H1 (cell line): ENCODE measurements at regions of chr11 and their contacts with region 1.

Region 1: DNA sequence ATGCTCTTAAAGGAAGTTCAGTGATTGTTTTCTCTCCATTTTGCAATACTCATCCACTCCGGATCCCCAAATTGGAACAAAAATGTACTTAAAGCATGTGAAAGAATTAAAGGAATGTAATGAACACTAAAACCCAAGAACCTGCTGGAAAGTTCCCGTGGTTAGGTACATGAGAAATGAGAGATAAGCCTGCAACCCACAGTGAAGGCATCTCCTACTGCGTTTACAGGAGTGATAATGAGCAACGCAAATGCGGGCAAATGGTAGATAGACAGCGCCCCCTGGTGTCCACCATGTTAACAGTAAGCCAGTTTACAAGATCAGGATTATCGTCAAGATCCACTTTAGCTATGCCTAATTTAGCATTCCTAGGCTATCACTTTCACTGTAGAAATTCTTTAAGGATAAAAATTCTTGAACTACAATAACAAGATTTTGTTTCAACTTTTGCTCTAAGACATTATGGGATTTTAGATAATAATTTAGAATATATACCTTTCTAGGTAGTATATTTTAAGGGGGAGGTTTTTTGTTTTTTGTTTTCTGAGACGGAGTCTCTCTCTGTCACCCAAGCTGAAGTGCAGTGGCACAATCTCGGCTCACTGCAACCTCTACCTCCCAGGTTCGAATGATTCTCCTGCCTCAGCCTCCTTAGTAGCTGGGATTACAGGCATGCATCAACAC is 29.9 kb downstream of the ALG9 start:
- DNase-seq: peak; percentile 46 to 94
- H3K4me3 ChIP-seq: no peak overlapping the region
- H3K27ac ChIP-seq: no peak overlapping the region
- H3K4me1 ChIP-seq: peaks cover 0 to 7% (median 3%) of the 10 kb centered on the region in 4 experiments; a peak in 2 of 7 replicates
- H3K27me3 ChIP-seq: no peaks in the 10 kb centered on the region
- CTCF ChIP-seq: peak; percentile 56 to 91 (median 86)
- EP300 ChIP-seq: no peak
- POLR2A ChIP-seq: no peak
- RAD21 ChIP-seq: peak; percentile 97

Region 2: DNA sequence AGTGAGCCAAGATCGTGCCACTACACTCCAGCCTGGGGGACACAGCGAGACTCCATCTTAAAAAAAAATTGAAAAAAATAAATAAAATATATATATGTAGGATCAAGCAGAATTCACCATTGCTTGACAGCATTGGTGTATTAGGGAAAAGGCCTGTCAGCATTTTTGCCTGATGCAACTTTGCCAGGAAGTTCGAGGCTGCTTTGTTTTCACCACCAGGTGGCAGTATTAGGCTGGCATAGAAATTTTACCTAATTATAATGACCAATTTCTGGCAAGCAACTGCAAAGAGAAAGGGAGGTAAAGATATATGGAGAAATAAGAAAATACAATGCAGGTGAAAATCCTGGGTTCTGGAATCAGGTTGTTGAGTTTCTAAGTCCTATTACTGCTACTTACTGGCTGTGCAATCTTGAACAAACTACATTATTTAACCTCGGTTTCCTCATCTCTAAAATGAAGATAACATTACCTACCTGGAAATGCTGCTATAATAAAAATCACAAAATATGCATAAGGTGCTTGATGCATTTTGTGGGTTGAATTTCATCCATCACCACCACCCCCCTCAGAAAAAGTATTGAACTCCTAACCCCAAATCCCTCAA is 276.3 kb before region 1 on chr11:
- CTCF ChIA-PET with region 1: interaction called, 11 read pairs
- POLR2A ChIA-PET with region 1: no interaction called
- DNase-seq: peak in 1 of 2 experiments; percentile 72
- H3K4me3 ChIP-seq: no peak overlapping the region
- H3K27ac ChIP-seq: no peak overlapping the region
- H3K4me1 ChIP-seq: peaks cover 0 to 6% (median 4%) of the 10 kb centered on the region in 4 experiments; a peak in 4 of 7 replicates
- H3K27me3 ChIP-seq: no peaks in the 10 kb centered on the region
- CTCF ChIP-seq: peak; percentile 6 to 74 (median 72)
- EP300 ChIP-seq: no peak
- POLR2A ChIP-seq: no peak
- RAD21 ChIP-seq: peak; percentile 81 to 84

Region 3: GRCh38 chr11:111601979-111602864 is 239.3 kb before region 1 on chr11 and contains the start of gene SIK2:
- CTCF ChIA-PET with region 1: interaction called, 12 read pairs
- POLR2A ChIA-PET with region 1: no interaction called
- DNase-seq: peak; percentile 92
- H3K4me3 ChIP-seq: peak within 1 kb of the TSS; percentile 62 to 96 (median 77)
- H3K27ac ChIP-seq: peak within 1 kb of the TSS; percentile 45; the same call in 1 of the 2 replicates
- H3K4me1 ChIP-seq: peaks cover 0 to 10% (median 3%) of the 10 kb centered on the region in 4 experiments; a peak in 2 of 7 replicates
- H3K27me3 ChIP-seq: peaks cover 0 to 18% (median 12%) of the 10 kb centered on the region in 4 experiments; a peak in 5 of 7 replicates
- CTCF ChIP-seq: peak; percentile 93 to 97 (median 96)
- EP300 ChIP-seq: peak in 1 of 2 experiments; percentile 39; a peak in 1 of 3 replicates
- POLR2A ChIP-seq: 0 out of 3 replicates have a peak, but pooled peaks of 1 of the 2 experiments have one; percentile 53
- RAD21 ChIP-seq: peak; percentile 99
- total RNA-seq, gene SIK2: 8.8 and 12.7 TPM in 2 replicates

Region 4: GRCh38 chr11:111823131-111823530 is 18.4 kb before region 1 on chr11:
- CTCF ChIA-PET with region 1: interaction called, 12 read pairs
- POLR2A ChIA-PET with region 1: interaction called, 3 read pairs
- DNase-seq: no peak
- H3K4me3 ChIP-seq: peak overlapping the region in 1 of 4 experiments; percentile 9; a peak in 1 of 8 replicates
- H3K27ac ChIP-seq: no peak overlapping the region
- H3K4me1 ChIP-seq: peaks cover 0 to 5% (median 3%) of the 10 kb centered on the region in 4 experiments; a peak in 3 of 7 replicates
- H3K27me3 ChIP-seq: no peaks in the 10 kb centered on the region
- CTCF ChIP-seq: no peak
- EP300 ChIP-seq: no peak
- POLR2A ChIP-seq: no peak
- RAD21 ChIP-seq: no peak

Region 5: DNA sequence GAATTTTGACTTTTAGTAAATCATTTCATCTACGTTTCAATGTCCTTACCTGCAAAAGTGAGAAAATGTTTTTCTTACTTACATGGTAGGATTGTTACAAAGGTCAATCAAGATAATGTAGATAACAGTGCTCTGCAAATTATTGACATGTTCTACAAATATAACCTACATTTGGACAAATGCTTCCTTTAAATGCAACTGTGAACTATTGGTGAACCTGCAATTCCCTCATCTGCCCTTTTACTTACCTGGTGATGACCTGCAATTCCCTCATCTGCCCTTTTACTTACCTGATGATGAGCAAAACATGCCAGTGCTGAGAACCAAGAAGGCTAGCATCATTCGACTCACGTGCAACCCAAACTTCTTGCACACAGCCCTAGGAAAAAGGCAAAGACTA is 18.7 kb after region 1 on chr11:
- CTCF ChIA-PET with region 1: interaction called, 10 read pairs
- POLR2A ChIA-PET with region 1: no interaction called
- DNase-seq: no peak
- H3K4me3 ChIP-seq: no peak overlapping the region
- H3K27ac ChIP-seq: no peak overlapping the region
- H3K4me1 ChIP-seq: no peaks in the 10 kb centered on the region
- H3K27me3 ChIP-seq: no peaks in the 10 kb centered on the region
- CTCF ChIP-seq: no peak
- EP300 ChIP-seq: no peak
- POLR2A ChIP-seq: no peak
- RAD21 ChIP-seq: no peak

Region 6: GRCh38 chr11:111926505-111927391 is 85.2 kb after region 1 on chr11:
- CTCF ChIA-PET with region 1: no interaction called
- POLR2A ChIA-PET with region 1: no interaction called
- DNase-seq: peak; percentile 94 to 97
- H3K4me3 ChIP-seq: peak overlapping the region; percentile 47 to 70 (median 58); a peak in 7 of 8 replicates
- H3K27ac ChIP-seq: peak overlapping the region; percentile 75
- H3K4me1 ChIP-seq: peaks cover 0 to 10% (median 3%) of the 10 kb centered on the region in 4 experiments; a peak in 5 of 7 replicates
- H3K27me3 ChIP-seq: no peaks in the 10 kb centered on the region; a peak in 1 of 7 replicates
- CTCF ChIP-seq: peak in 1 of 3 experiments; percentile 2; a peak in 1 of 4 replicates
- EP300 ChIP-seq: no peak
- POLR2A ChIP-seq: peak; percentile 15 to 82
- RAD21 ChIP-seq: no peak